HEK293 (cell line): ENCODE measurements at regions of chr2 and their contacts with region 1.

Region 1: DNA sequence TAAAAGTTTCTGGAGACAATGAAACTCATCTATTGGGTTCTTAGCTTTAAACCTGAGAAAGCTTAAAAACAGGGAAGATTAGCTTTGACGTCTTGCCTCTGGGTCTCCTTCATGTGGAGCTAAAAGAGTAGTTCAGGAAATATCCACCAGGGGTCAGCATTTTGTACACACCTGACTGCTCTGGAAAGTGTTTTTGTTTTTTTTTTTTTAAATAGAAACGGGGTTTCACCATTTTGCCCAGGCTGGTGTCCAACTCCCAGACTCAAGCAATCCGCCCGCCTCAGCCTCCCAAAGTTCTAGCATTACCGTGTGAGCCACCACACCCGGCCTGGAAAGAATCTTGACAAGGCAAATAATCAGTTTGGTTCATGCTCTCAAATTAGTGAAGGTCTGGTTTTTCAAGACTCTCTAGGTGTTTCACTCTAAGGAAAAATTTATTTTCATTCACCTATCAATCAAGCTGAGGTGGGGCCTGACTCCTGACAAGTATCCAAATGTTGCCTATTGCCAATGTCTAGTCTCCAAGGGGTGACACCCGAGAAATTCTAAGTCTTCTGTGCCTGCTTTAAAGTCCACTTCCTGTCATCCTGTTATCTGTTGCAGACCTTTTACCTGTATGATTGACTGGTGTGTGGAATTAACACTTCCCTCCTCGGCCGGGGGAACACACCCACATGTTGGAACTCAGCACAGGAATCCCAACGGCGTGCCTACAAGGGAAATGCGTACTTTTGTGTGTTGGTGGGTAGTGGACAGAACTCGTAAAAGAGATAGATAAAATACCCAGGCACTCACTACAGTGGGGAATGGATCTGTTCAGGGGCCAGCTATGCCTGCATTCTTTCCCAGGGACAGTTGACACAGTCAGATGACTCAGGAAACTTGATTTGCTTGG is 11.3 kb downstream of the IL1RN start:
- H3K4me3 ChIP-seq: no peak overlapping the region
- H3K27ac ChIP-seq: no peak overlapping the region
- H3K4me1 ChIP-seq: no peaks in the 10 kb centered on the region
- CTCF ChIP-seq: peak; percentile 50

Region 2: DNA sequence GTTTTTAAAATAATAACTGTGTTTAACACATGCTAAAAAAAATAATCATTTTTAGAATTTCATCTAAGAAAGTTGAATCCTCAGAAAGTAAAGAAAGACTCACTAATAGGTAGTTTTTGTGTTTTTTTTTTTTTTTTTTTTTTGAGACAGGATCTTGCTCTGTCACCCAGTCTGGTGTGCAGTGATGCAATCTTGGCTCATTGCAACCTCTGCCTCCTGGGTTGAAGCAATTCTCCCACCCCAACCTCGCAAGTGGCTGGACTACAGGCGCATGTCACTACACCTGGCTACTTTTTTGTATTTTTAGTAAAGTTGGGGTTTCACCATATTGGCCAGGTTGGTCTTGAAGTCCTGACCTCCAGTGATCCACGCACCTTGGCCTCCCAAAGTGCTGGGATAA is 381.4 kb before region 1 on chr2:
- CTCF ChIA-PET with region 1: no interaction called
- POLR2A ChIA-PET with region 1: no interaction called
- H3K4me3 ChIP-seq: no peak overlapping the region
- H3K27ac ChIP-seq: no peak overlapping the region
- H3K4me1 ChIP-seq: peaks cover 8% of the 10 kb centered on the region
- CTCF ChIP-seq: no peak

Region 3: GRCh38 chr2:112881217-112881985 is 257.3 kb before region 1 on chr2:
- CTCF ChIA-PET with region 1: no interaction called
- POLR2A ChIA-PET with region 1: no interaction called
- H3K4me3 ChIP-seq: no peak overlapping the region
- H3K27ac ChIP-seq: no peak overlapping the region
- H3K4me1 ChIP-seq: peaks cover 2% of the 10 kb centered on the region; the same call in 1 of the 2 replicates
- CTCF ChIP-seq: no peak

Region 4: GRCh38 chr2:113068718-113069435 is 69.8 kb before region 1 on chr2:
- CTCF ChIA-PET with region 1: no interaction called
- POLR2A ChIA-PET with region 1: no interaction called
- H3K4me3 ChIP-seq: no peak overlapping the region
- H3K27ac ChIP-seq: no peak overlapping the region
- H3K4me1 ChIP-seq: no peaks in the 10 kb centered on the region
- CTCF ChIP-seq: no peak

Region 5: GRCh38 chr2:113117541-113118262 is 21.0 kb before region 1 on chr2:
- CTCF ChIA-PET with region 1: interaction called, 66 read pairs
- POLR2A ChIA-PET with region 1: no interaction called
- H3K4me3 ChIP-seq: no peak overlapping the region
- H3K27ac ChIP-seq: no peak overlapping the region
- H3K4me1 ChIP-seq: no peaks in the 10 kb centered on the region
- CTCF ChIP-seq: no peak

Region 6: DNA sequence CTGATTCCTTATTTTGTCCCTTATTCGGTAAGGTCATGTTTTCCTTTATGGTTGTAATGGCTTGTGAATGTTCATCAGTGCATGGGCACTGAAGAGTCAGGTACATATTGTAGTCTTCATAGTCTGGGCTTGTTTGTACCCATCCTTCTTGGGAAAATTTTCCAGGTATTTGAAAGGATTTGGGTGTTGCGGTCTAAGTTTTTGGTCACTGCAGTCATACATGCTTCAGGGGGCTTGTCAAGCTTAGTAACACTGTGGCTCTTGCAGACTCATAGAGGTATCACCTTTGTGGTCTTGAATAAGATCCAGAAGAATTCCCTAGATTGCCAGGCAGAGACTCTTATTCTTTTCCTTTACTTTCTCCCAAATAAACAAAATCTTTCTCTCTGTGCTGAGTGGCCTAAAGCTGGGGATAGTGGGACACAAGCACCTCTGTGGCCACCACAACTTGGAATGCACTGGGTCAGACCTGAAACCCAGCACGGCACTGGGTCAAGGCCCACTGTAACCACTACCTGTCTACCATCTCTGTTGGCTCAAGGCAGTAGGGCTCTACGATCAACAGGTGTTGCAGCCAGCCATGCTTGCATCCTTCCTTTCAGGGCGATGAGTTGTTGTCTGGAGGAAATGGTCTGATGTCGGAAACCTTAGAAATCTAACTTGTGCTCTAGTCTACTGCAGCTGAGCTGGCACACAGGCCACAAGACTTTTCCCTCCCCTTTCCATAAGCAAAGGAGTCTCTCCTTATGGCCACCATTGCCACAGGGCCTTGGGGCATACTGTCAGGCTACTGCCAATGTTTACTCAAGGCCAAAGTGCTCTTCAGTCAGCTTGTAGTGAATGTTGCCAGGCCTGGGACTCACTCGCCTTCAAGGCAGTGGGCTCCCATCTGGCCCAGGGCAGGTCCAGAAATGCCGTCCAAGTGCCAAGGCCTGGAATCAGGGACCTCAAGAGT is 10.2 kb after region 1 on chr2:
- CTCF ChIA-PET with region 1: interaction called, 11 read pairs
- POLR2A ChIA-PET with region 1: no interaction called
- H3K4me3 ChIP-seq: no peak overlapping the region
- H3K27ac ChIP-seq: no peak overlapping the region
- H3K4me1 ChIP-seq: no peaks in the 10 kb centered on the region
- CTCF ChIP-seq: no peak

Region 7: DNA sequence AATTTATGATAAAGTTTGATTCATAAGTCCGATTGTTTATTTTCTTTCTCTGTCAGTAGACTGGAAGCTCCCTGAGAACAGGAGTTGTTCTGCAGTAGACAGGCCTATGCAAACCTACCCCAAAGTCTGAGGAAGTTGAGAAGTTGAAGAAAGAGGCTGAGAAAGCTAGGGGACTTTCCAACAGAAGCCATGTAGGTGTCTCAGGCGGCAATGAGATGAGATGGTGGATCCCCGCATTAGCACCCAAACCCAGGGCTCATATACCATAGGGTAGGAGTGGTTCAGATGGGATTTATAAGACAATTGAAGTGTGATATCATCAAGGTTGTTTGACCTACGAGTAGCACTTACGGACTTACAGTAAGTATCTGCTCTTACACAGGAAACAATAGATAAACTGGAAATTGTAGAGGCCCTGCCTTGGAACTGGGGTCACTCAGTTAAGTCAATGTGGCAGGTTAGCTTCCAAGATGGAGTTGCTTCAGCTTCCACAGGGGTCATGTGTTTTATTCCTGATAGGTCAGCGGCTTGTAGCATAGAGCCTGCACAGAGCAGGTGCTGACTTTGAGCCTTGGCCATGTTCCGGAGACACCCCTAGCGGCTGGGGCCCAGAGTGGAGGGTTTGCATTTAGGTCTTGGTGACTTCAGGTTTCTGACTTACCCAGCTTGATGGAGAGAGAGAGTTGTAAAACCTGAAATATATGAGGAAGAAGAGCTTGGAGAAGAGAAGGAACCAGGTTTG is 32.8 kb after region 1 on chr2:
- CTCF ChIA-PET with region 1: interaction called, 12 read pairs
- POLR2A ChIA-PET with region 1: no interaction called
- H3K4me3 ChIP-seq: no peak overlapping the region
- H3K27ac ChIP-seq: no peak overlapping the region
- H3K4me1 ChIP-seq: no peaks in the 10 kb centered on the region
- CTCF ChIP-seq: no peak

Region 8: GRCh38 chr2:113203901-113204519 is 65.3 kb after region 1 on chr2:
- CTCF ChIA-PET with region 1: interaction called, 177 read pairs
- POLR2A ChIA-PET with region 1: interaction called, 3 read pairs
- H3K4me3 ChIP-seq: no peak overlapping the region
- H3K27ac ChIP-seq: no peak overlapping the region
- H3K4me1 ChIP-seq: peaks cover 2% of the 10 kb centered on the region; the same call in 1 of the 2 replicates
- CTCF ChIP-seq: peak; percentile 86

Region 9: GRCh38 chr2:113337809-113338208 is 199.1 kb after region 1 on chr2:
- CTCF ChIA-PET with region 1: no interaction called
- POLR2A ChIA-PET with region 1: no interaction called
- H3K4me3 ChIP-seq: no peak overlapping the region
- H3K27ac ChIP-seq: no peak overlapping the region
- H3K4me1 ChIP-seq: no peaks in the 10 kb centered on the region
- CTCF ChIP-seq: no peak

Region 10: DNA sequence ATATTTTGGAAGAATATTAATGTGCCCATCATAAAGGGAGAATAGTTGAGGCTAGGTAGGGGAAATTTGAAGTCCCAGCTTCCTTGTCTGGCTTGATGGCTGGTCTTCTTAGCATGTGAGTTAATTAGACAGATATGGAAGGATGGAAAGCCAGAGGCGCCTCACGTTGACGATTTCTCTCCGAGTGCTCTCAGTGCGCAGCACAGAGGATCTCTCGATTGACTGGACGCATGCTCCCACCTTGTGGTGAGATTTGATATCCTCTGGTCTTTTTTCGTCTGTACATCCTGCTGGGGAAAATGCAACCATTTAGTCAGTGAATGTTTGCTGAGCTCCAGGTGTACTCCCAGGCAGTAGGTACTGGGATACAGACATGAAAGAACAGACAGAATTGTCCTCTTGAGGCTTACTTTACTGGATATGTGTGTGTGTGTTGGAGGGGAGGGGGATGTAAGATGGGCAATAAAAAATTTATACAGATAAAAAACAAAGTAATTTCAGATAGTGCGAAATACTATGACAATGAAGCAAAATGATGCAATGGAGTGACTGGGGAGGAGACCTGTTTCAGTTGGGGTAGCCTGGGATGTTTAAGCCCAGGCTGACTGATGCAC is 231.9 kb after region 1 on chr2:
- CTCF ChIA-PET with region 1: interaction called, 30 read pairs
- POLR2A ChIA-PET with region 1: no interaction called
- H3K4me3 ChIP-seq: no peak overlapping the region
- H3K27ac ChIP-seq: no peak overlapping the region
- H3K4me1 ChIP-seq: no peaks in the 10 kb centered on the region
- CTCF ChIP-seq: peak; percentile 75